Sciatic nerve (tissue), 2 donors: ENCODE measurements at regions of chr20 and their contacts with region 1.

Region 1: GRCh38 chr20:63374504-63374903 is 13.4 kb upstream of the CHRNA4 start:
- DNase-seq: no peak
- ATAC-seq: no peak

Region 2: GRCh38 chr20:62752671-62753501 is 621.6 kb before region 1 on chr20:
- intact Hi-C with region 1: no loop called
- DNase-seq: no peak
- ATAC-seq: no peak

Region 3: GRCh38 chr20:63312690-63313348 is 61.7 kb before region 1 on chr20:
- intact Hi-C with region 1: loop called (anchors 2 kb)
- DNase-seq: no peak
- ATAC-seq: no peak